ENCODE measurements at regions of chr2 and their contacts with region 1.

Region 1: GRCh38 chr2:60948926-60949579 is 67.7 kb downstream of the REL start:
- DNase-seq: peak; percentile 78
- H3K27ac ChIP-seq: peak overlapping the region; percentile 96
- CTCF ChIP-seq: no peak

Region 2: DNA sequence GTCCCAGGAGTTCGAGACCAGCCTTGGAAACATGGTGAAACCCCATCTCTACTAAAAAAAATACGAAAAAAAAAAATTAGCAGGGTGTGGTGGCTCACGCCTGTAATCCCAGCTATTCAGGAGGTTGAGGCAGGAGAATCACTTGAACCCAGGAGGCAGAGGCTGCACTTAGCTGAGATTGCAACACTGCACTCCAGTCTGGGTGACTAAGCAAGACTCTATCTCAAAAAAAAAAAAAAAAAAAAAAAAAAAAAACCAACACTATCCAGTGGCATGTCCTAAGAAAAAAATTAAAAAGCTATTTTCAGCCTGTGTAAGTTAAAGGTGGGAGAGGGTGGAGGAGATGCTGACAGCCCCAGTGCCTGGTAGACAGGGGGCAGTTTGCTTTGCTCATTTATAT is 99.9 kb before region 1 on chr2:
- CTCF ChIA-PET with region 1: no interaction called
- POLR2A ChIA-PET with region 1: interaction called, 18 read pairs
- DNase-seq: no peak
- H3K27ac ChIP-seq: no peak overlapping the region
- CTCF ChIP-seq: no peak